ENCODE measurements at regions of chr5 and their contacts with region 1.

Region 1: GRCh38 chr5:159156426-159157238 is 52.7 kb downstream of the RNF145 start:
- DNase-seq: peak; percentile 70
- H3K4me3 ChIP-seq: no peak overlapping the region
- H3K27ac ChIP-seq: no peak overlapping the region
- H3K4me1 ChIP-seq: peaks cover 10% of the 10 kb centered on the region
- H3K27me3 ChIP-seq: no peaks in the 10 kb centered on the region
- CTCF ChIP-seq: peak; percentile 64 to 69
- POLR2A ChIP-seq: no peak

Region 2: GRCh38 chr5:159184858-159185381 is 28.3 kb after region 1 on chr5:
- CTCF ChIA-PET with region 1: interaction called, 15 read pairs
- POLR2A ChIA-PET with region 1: no interaction called
- dilution Hi-C with region 1: no loop called
- intact Hi-C with region 1: no loop called
- DNase-seq: peak; percentile 19
- H3K4me3 ChIP-seq: no peak overlapping the region
- H3K27ac ChIP-seq: no peak overlapping the region
- H3K4me1 ChIP-seq: peaks cover 12% of the 10 kb centered on the region
- H3K27me3 ChIP-seq: no peaks in the 10 kb centered on the region
- CTCF ChIP-seq: no peak
- POLR2A ChIP-seq: no peak

Region 3: DNA sequence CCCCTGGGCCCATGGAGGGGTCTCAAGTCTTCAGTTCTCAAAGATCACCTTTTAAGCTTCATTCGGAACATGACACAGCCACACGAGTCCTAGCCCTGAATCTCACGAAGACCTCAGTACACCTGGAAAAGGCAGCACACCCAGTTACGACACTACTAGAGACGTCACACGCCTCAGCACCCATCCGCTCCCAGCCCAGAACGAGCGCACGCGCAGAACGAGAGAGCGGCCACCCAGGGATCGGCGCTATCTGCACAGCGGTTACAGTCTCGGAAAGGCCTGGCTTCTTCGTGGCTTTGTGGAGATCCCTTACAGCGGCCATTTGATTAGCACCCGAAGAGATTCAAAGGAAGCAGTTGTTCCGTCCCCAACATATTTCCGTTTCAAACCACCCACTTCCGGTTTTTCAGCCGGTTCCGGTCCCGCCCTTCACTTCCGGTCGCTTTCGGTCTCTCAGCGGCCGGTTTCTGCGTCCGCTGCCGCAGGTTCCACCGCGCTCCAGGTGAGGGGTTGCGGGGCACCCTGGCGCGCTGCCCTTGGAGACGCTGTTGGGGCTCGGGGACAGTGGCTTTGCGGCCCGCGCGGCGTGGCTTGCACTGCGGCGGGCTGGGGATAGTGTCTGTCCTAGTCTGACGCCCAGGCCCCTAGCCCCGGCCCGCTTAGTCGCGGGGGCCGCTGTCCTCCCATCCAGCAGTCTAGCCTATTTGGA is 106.4 kb after region 1 on chr5 and contains the start of gene UBLCP1:
- CTCF ChIA-PET with region 1: interaction called, 6 read pairs
- POLR2A ChIA-PET with region 1: no interaction called
- dilution Hi-C with region 1: no loop called
- intact Hi-C with region 1: loop called (anchors 2 kb)
- DNase-seq: peak; percentile 67
- H3K4me3 ChIP-seq: peak within 1 kb of the TSS; percentile 13 to 84 (median 63)
- H3K27ac ChIP-seq: peak within 1 kb of the TSS; percentile 34
- H3K4me1 ChIP-seq: peaks cover 11% of the 10 kb centered on the region
- H3K27me3 ChIP-seq: peaks cover 0 to 2% of the 10 kb centered on the region in 2 experiments
- CTCF ChIP-seq: no peak
- POLR2A ChIP-seq: peak; percentile 77
- total RNA-seq, gene UBLCP1: 18.2 and 20.3 TPM in 2 replicates

Region 4: GRCh38 chr5:159310511-159310910 is 153.9 kb after region 1 on chr5:
- CTCF ChIA-PET with region 1: interaction called, 164 read pairs
- POLR2A ChIA-PET with region 1: no interaction called
- dilution Hi-C with region 1: no loop called
- intact Hi-C with region 1: no loop called
- DNase-seq: no peak
- H3K4me3 ChIP-seq: no peak overlapping the region
- H3K27ac ChIP-seq: no peak overlapping the region
- H3K4me1 ChIP-seq: no peaks in the 10 kb centered on the region
- H3K27me3 ChIP-seq: peaks cover 10 to 39% of the 10 kb centered on the region in 2 experiments
- CTCF ChIP-seq: no peak
- POLR2A ChIP-seq: no peak

Region 5: DNA sequence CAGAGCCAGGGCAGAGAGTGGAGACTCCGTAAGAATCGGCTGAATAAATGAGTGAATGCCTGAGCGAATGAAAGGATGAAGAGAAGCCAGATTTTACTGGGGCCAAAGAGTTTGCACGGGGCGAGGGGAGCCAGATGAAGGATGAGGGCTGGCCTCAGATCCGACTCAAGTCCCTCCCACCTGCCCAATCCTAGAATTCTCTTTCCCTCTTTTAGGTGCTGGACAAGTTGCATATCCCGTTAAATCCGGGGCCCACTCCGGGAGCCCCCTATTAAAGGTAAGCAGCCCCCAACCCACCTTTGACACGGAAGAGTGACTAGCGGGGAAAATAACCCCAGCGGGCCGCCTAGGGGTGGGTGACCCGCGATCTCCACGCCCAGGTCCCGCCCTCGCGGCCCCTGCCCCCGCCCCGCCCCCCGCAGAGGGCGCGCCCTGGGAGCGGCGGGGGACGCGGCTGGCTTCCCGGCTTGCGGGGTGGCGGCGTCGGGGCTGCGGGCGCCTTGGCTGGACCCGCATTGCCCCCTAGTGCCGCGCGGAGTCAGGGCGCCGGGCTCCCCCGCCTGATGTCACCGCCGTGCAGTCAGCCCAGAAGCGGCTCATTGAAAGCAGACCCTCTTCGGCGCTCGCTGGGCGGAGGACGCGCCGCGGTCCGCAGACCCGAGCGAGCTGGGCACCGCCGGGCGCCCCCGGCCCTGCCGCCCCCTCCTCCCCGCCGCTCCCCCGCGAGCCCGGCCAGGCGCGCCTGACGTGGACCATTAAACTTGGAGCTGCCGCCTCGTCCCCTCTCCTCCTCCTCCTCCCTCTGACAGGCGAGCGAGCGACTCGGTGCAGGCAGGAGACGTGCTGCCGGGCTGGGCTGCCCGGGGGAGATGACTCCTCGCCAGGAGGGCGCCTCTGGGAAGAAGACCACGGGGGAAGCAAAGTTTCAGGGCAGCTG is 759.5 kb after region 1 on chr5 and contains the start of gene ADRA1B:
- CTCF ChIA-PET with region 1: interaction called, 16 read pairs
- POLR2A ChIA-PET with region 1: no interaction called
- dilution Hi-C with region 1: no loop called
- intact Hi-C with region 1: loop called (anchors 1 kb)
- DNase-seq: peak; percentile 42
- H3K4me3 ChIP-seq: peak within 1 kb of the TSS in 2 of 3 experiments; percentile 28 to 48
- H3K27ac ChIP-seq: no peak within 1 kb of the TSS
- H3K4me1 ChIP-seq: peaks cover 27% of the 10 kb centered on the region
- H3K27me3 ChIP-seq: peaks cover 4 to 10% of the 10 kb centered on the region in 2 experiments
- CTCF ChIP-seq: peak; percentile 19 to 55
- POLR2A ChIP-seq: no peak
- total RNA-seq, gene ADRA1B: 0.21 TPM in 1 of 2 replicates, not detected in the other